ENCODE measurements at regions of chrX and their contacts with region 1.

Region 1: DNA sequence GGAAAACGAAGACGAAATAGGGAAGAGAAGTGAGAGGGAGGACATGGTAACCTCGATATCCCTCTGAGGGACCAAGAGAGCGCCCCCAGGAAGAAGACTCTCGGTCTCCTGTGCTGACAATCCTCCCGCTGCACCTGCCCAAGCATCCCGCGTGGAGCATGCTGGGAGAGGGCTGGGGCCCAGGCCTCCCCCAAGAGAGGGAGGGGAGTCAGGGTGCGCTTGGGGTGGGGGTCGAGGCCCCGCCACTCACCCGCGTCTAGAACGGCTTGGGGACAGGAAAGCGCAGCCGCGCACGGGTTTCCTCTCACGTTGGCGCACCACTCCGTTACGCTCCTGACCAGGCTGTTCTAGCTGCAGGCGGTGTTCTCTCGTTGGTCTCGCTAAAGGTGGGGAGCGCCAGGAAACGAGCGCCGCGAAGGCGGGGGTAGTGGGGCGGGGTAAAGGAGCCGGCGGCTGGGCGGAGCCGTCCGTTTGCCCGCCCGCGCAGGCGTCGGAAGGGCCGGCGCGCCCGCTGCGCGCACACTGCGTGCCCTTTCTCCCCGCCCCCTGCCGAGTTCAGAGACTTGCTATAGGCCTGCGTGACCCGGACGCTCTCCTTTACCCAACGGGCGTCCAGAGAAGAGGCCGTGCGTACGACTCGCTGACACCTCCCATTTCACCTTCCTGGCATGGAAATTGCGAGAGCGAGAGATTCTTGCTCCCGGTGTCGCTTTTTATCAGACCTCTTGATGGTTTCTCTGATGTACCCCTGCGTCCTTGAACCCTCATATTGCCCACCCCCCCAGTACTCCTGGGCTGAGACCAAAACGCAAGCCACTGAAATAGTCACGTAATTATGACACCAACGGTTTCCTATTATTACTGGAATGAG is at the start of gene C1GALT1C1:
- DNase-seq: peak; percentile 86
- ATAC-seq: peak; percentile 99
- H3K4me3 ChIP-seq: peak within 1 kb of the TSS; percentile 62 to 77
- H3K27ac ChIP-seq: peak within 1 kb of the TSS; percentile 99
- H3K4me1 ChIP-seq: peaks cover 2% of the 10 kb centered on the region
- H3K27me3 ChIP-seq: no peaks in the 10 kb centered on the region
- CTCF ChIP-seq: no peak
- total RNA-seq, gene C1GALT1C1: 32.4 TPM

Region 2: GRCh38 chrX:120036704-120037103 is 593.2 kb before region 1 on chrX:
- CTCF ChIA-PET with region 1: no interaction called
- POLR2A ChIA-PET with region 1: no interaction called
- in situ Hi-C with region 1: no loop called
- intact Hi-C with region 1: no loop called
- DNase-seq: no peak
- ATAC-seq: no peak
- H3K4me3 ChIP-seq: no peak overlapping the region
- H3K27ac ChIP-seq: no peak overlapping the region
- H3K4me1 ChIP-seq: no peaks in the 10 kb centered on the region
- H3K27me3 ChIP-seq: no peaks in the 10 kb centered on the region
- CTCF ChIP-seq: no peak

Region 3: DNA sequence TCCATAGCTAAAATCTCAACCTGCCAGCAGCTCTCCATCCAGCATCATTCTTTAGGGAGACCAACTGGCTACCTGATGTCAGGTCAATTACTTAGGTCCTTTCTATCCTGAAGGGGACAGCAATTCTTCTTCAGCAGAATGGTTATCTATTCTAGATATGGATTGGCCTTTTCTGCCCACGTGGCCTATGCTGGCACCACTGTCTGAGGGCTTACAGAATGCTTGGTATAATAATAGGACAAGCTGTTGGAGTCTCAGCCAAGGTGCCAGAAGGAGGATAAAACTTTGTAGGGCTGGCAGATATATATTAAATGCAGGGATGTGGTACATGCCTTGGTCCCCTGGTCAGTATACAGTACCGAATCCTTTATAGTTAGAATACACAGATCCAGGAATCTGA is 89.7 kb after region 1 on chrX:
- CTCF ChIA-PET with region 1: no interaction called
- POLR2A ChIA-PET with region 1: interaction called, 10 read pairs
- in situ Hi-C with region 1: no loop called
- intact Hi-C with region 1: no loop called
- DNase-seq: no peak
- ATAC-seq: no peak
- H3K4me3 ChIP-seq: no peak overlapping the region
- H3K27ac ChIP-seq: no peak overlapping the region
- H3K4me1 ChIP-seq: no peaks in the 10 kb centered on the region
- H3K27me3 ChIP-seq: no peaks in the 10 kb centered on the region; the same call in 1 of the 2 replicates
- CTCF ChIP-seq: no peak